Activated CD4-positive, alpha-beta T cell treated with anti-CD3 and anti-CD28 coated beads for 36 hours (primary cell): ENCODE measurements at regions of chr10 and their contacts with region 1.

Region 1: GRCh38 chr10:72297968-72298773 is 24.4 kb downstream of the DDIT4 start:
- DNase-seq: peak; percentile 98
- ATAC-seq: peak; percentile 72
- H3K4me3 Mint-ChIP-seq: peak overlapping the region; percentile 80
- H3K27ac Mint-ChIP-seq: peak overlapping the region; percentile 99
- H3K4me1 Mint-ChIP-seq: peaks cover 68% of the 10 kb centered on the region
- H3K27me3 Mint-ChIP-seq: no peaks in the 10 kb centered on the region

Region 2: DNA sequence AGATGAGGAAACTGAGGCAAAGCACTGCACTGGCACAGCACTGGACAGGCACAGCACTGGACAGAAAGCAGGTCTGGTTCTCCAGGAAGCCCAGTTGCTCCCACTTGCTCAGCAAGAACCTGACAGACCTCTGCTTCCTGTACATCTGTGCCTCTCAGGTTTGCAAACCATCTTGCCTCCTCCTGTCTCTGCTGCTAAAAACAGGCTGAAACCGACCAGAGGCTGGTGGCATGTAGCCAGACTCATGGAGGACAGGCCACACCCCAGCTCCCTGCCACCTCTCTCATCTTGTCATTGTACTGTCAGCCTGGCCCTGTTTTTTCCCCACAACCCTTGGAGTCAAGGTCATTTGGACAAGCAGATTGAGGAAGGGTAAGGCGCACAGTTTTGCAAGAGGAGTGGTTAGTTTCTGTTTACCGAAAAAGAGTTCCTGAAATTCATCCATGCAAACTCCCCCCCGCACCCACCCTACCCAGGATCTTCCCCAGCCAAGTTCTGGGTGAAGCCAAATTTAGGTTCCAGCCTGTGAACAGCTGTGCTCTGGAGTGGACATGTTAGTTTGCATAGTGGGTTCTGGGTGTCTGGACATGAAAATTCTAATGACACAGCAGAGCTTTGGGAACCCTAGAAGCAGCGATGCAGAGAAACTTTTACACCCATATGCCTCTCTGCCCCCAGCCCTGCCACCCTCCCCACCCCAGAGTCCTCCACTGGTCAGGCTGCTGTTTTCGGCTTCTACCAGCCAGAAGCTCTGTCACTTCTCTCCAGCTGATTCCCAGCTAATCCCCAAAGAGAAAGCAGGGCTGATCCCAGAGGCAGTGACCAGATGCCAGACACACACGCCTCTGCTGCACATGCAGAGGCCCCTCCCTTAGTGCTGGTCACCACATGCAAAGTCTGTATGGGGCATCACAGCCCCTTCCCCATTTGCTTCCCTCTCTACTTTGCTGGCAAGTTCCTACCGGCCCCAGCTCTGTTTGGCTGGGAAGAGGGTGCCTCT is 570.1 kb before region 1 on chr10:
- CTCF ChIA-PET with region 1: no interaction called
- POLR2A ChIA-PET with region 1: interaction called, 3 read pairs
- intact Hi-C with region 1: loop called in 1 of 2 experiments (anchors 5 kb)
- DNase-seq: peak; percentile 86
- ATAC-seq: peak; percentile 45
- H3K4me3 Mint-ChIP-seq: peak overlapping the region; percentile 36
- H3K27ac Mint-ChIP-seq: peak overlapping the region; percentile 96
- H3K4me1 Mint-ChIP-seq: peaks cover 96% of the 10 kb centered on the region
- H3K27me3 Mint-ChIP-seq: no peaks in the 10 kb centered on the region

Region 3: GRCh38 chr10:72248468-72249151 is 49.6 kb before region 1 on chr10:
- CTCF ChIA-PET with region 1: no interaction called
- POLR2A ChIA-PET with region 1: interaction called, 3 read pairs
- intact Hi-C with region 1: loop called in 1 of 2 experiments (anchors 2 kb)
- DNase-seq: peak; percentile 84
- ATAC-seq: peak; percentile 91
- H3K4me3 Mint-ChIP-seq: peak overlapping the region; percentile 71
- H3K27ac Mint-ChIP-seq: peak overlapping the region; percentile 89
- H3K4me1 Mint-ChIP-seq: peaks cover 82% of the 10 kb centered on the region
- H3K27me3 Mint-ChIP-seq: no peaks in the 10 kb centered on the region

Region 4: DNA sequence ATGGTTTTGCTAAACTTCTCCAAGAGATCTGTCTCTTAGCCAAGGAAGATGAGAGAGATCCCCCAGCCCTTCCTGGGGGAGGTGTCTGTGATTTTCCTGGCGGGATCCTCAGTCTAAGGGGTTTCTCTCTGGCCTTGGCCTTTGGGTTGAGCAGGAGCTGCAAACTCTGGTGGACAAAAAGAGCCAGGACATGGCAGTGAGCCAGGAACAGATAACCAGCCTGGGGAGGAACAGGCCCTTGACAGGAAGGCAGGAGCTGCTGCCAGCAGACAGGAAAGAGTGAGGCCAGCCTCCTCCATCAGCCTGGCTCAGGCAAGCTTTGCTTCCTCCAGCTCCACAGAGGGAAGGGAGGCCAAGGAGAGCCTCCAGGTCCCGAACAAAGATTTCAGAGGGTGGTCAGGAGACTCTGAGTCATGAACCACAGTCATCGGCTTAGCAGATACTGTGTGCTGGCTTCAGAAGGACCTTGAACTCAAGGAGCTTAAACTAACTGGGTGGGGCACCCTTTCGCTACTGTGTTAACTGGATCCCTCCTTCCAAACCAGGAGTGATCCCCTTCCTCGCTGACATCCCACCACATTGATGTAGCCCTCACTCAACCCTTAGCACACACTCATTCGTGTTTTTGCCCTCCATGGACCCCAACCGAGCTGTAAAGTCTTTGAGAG is 10.3 kb after region 1 on chr10:
- CTCF ChIA-PET with region 1: interaction called, 13 read pairs
- POLR2A ChIA-PET with region 1: interaction called, 43 read pairs
- intact Hi-C with region 1: loop called in 1 of 2 experiments (anchors 1 kb)
- DNase-seq: peak; percentile 68
- ATAC-seq: peak; percentile 26
- H3K4me3 Mint-ChIP-seq: peak overlapping the region; percentile 9
- H3K27ac Mint-ChIP-seq: peak overlapping the region; percentile 89
- H3K4me1 Mint-ChIP-seq: peaks cover 74% of the 10 kb centered on the region
- H3K27me3 Mint-ChIP-seq: no peaks in the 10 kb centered on the region

Region 5: DNA sequence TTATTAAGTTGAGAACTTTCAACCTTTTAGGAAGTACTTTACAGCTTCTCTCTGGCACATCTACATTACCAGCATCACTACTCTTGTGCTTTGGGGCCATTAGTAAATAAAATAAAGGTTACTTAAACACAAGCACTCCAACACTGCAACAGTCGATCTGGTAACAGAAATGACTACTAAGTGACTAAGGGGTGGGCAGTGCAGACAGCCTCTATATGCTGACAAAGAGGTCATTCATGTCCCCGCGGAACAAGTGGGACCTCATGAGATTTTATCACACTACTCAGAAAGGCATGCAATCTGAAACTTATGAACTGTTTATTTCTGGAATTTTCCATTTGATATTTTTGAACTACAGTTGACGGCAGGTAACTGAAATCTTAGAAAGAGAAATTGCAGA is 167.8 kb after region 1 on chr10:
- CTCF ChIA-PET with region 1: no interaction called
- POLR2A ChIA-PET with region 1: no interaction called
- intact Hi-C with region 1: no loop called
- DNase-seq: no peak
- ATAC-seq: no peak
- H3K4me3 Mint-ChIP-seq: no peak overlapping the region
- H3K27ac Mint-ChIP-seq: no peak overlapping the region
- H3K4me1 Mint-ChIP-seq: peaks cover 2% of the 10 kb centered on the region
- H3K27me3 Mint-ChIP-seq: no peaks in the 10 kb centered on the region

Region 6: DNA sequence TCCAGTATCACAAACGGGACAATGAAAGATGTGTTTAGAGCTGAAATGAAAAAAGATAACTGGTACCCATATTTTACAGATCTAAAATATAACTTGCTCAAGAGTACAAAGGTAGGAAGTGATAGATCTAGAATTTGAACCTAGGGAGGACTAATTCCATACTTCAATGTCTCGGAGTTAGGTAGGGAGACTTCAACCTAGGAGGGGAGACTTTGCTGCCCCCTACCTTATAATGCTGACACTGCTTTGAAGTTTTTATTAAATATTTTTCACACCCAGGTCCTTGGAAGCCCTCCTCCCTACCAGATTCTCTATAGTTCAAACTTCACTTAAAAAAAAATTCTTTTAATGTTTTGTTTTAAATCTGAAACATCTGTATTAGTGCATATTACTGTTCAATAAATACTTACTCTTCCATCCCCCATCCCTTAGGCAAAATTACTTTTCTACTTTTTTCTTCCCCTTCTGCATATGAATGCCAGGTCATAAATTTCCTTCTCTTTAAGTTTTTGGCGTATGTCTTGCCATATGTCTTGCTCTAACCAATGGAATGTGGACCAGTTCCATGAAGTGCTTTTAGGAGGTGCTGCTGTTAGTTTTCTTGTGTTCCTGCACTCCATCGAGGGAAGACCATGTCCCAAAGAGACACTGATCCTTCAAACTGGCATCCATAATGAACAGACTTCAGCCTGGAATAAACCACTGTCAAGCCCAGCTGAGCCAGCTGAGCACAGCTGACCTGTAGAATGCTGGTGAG is 269.9 kb after region 1 on chr10:
- CTCF ChIA-PET with region 1: no interaction called
- POLR2A ChIA-PET with region 1: interaction called, 4 read pairs
- intact Hi-C with region 1: loop called in 1 of 2 experiments (anchors 5 kb)
- DNase-seq: no peak
- ATAC-seq: no peak
- H3K4me3 Mint-ChIP-seq: no peak overlapping the region
- H3K27ac Mint-ChIP-seq: no peak overlapping the region
- H3K4me1 Mint-ChIP-seq: peaks cover 17% of the 10 kb centered on the region
- H3K27me3 Mint-ChIP-seq: no peaks in the 10 kb centered on the region